ENCODE measurements at regions of chr1 and their contacts with region 1.

Region 1: DNA sequence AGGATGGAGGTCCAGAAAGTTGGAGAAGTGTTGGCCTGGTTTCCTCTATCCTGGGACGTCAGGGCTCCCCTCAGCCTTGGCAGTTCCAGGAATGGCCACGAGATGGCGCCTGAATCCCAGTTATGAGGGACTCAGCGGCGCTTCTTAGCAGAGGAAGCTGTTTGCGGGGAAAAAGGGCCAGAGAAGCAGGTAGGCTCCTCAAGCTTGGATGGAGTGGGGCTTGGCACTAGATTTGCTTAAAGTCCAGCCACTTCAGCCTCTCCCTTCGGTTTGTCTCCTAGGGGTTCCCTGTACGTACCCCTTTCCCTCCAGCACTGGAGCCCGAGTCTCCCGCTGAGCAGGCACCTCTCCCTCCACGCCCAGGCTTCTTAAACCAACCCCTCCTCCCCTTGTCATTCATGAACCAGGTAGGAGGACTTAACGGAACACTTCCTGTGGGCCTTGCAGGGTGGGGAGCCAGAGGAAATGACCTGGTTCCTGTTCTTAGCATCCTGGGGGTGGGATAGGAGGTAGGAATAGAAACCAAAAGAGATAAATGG is 32.0 kb upstream of the TENT5B start:
- DNase-seq: peak; percentile 77
- H3K4me3 ChIP-seq: no peak overlapping the region
- H3K27ac ChIP-seq: no peak overlapping the region
- H3K4me1 ChIP-seq: peaks cover 5% of the 10 kb centered on the region
- H3K27me3 ChIP-seq: no peaks in the 10 kb centered on the region
- CTCF ChIP-seq: peak; percentile 95 to 96
- POLR2A ChIP-seq: no peak

Region 2: DNA sequence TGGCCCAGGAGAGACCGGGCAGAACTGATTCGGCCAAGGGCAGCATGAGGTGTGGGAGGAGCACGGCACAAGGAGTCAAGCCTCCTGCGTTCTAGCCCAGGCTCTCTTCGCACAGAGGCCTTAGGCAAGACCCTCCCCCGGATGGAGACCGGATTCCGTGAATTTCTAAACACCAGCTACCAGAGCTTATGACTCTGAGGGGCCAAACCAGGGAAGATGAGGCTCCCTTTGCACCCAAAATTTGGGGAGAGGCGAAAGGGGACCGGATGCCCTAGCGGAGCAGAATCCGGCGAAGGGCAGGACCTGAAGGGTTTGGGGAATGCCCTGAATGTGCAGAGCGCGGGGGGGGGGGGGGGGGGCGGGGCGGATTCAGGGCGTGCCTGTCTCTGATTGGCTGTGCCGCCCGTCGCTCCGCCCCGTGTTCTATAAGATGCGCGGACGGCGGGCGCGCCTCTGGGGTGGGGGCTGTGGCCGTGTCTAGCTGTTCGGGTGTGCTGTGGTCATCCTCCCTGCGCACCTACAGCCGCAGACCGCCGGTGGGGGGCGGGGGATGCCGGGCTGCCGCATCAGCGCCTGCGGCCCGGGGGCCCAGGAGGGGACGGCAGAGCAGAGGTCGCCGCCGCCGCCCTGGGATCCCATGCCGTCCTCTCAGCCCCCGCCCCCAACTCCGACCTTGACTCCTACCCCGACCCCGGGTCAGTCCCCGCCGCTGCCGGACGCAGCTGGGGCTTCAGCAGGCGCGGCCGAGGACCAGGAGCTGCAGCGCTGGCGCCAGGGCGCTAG is 51.3 kb before region 1 on chr1 and contains the start of gene TRNP1:
- CTCF ChIA-PET with region 1: interaction called, 181 read pairs
- POLR2A ChIA-PET with region 1: no interaction called
- dilution Hi-C with region 1: no loop called
- intact Hi-C with region 1: loop called (anchors 1 kb)
- DNase-seq: peak; percentile 50
- H3K4me3 ChIP-seq: peak within 1 kb of the TSS; percentile 43 to 61 (median 51)
- H3K27ac ChIP-seq: no peak within 1 kb of the TSS
- H3K4me1 ChIP-seq: peaks cover 42% of the 10 kb centered on the region
- H3K27me3 ChIP-seq: no peaks in the 10 kb centered on the region
- CTCF ChIP-seq: no peak
- POLR2A ChIP-seq: peak; percentile 89
- total RNA-seq, gene TRNP1: 5.9 and 10.3 TPM in 2 replicates

Region 3: DNA sequence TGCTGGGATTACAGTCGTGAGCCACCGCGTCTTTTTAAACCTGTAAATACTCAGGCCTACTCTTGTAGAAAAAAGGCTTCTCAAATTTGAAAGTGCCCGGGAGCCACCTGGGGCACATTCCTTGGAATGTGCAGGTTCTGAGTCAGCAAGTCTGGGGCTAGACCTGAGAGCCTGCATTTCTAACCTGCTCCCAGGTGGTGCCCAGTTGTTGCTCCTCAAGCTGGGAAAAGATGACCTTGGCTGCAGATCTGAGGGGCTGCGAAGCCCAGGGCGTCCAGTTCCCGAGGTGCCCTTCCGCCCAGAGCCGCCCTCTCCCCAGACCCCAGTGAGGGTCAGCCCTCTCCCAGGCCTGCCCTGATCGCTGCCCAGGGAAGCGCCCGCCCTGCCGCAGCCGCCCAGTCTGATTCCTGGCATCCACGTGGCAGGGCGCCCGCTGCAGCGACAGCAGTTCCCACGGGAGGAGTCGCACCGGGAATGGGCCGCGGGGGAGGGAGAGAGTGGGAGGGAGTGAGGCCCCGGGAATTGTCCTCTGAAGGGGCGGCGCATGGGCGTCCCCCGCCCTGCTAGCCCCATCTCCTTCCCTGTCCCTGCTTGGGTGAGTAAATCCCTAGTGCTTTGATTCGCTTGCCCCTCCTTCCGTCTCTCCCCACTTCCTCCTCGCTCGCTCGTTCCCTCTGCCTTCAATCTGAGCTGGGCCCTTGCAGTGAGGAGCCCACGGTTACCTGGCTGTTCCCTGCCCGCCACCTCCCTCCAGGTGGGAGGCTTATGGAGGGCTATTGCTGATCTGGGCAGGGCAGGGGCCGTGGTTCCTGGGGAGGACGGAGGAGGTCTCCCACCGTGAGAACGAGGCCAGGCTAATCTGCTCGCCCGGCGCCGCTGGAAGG is 13.2 kb before region 1 on chr1:
- CTCF ChIA-PET with region 1: interaction called, 53 read pairs
- POLR2A ChIA-PET with region 1: no interaction called
- dilution Hi-C with region 1: no loop called
- intact Hi-C with region 1: no loop called
- DNase-seq: peak; percentile 87
- H3K4me3 ChIP-seq: peak overlapping the region in 1 of 3 experiments; percentile 23
- H3K27ac ChIP-seq: no peak overlapping the region
- H3K4me1 ChIP-seq: peaks cover 20% of the 10 kb centered on the region
- H3K27me3 ChIP-seq: peaks cover 0 to 2% of the 10 kb centered on the region in 2 experiments
- CTCF ChIP-seq: no peak
- POLR2A ChIP-seq: no peak

Region 4: GRCh38 chr1:27077968-27078367 is 33.3 kb after region 1 on chr1:
- CTCF ChIA-PET with region 1: interaction called, 31 read pairs
- POLR2A ChIA-PET with region 1: no interaction called
- dilution Hi-C with region 1: no loop called
- intact Hi-C with region 1: no loop called
- DNase-seq: no peak
- H3K4me3 ChIP-seq: no peak overlapping the region
- H3K27ac ChIP-seq: no peak overlapping the region
- H3K4me1 ChIP-seq: no peaks in the 10 kb centered on the region
- H3K27me3 ChIP-seq: peaks cover 0 to 4% of the 10 kb centered on the region in 2 experiments
- CTCF ChIP-seq: no peak
- POLR2A ChIP-seq: no peak

Region 5: GRCh38 chr1:27111626-27112573 is 67.2 kb after region 1 on chr1:
- CTCF ChIA-PET with region 1: interaction called, 13 read pairs
- POLR2A ChIA-PET with region 1: no interaction called
- dilution Hi-C with region 1: no loop called
- intact Hi-C with region 1: no loop called
- DNase-seq: peak; percentile 99
- H3K4me3 ChIP-seq: no peak overlapping the region
- H3K27ac ChIP-seq: peak overlapping the region; percentile 78
- H3K4me1 ChIP-seq: peaks cover 34% of the 10 kb centered on the region
- H3K27me3 ChIP-seq: no peaks in the 10 kb centered on the region
- CTCF ChIP-seq: peak; percentile 29 to 33
- POLR2A ChIP-seq: no peak

Region 6: GRCh38 chr1:27284425-27285273 is 240.0 kb after region 1 on chr1:
- CTCF ChIA-PET with region 1: interaction called, 26 read pairs
- POLR2A ChIA-PET with region 1: no interaction called
- dilution Hi-C with region 1: no loop called
- intact Hi-C with region 1: loop called (anchors 1 kb)
- DNase-seq: peak; percentile 74
- H3K4me3 ChIP-seq: no peak overlapping the region
- H3K27ac ChIP-seq: no peak overlapping the region
- H3K4me1 ChIP-seq: no peaks in the 10 kb centered on the region
- H3K27me3 ChIP-seq: no peaks in the 10 kb centered on the region
- CTCF ChIP-seq: peak; percentile 76 to 85
- POLR2A ChIP-seq: no peak

Measured in endothelial cell of umbilical vein (primary cell).